Right ventricle myocardium superior (tissue), 1 donor: ENCODE measurements at regions of chr3 and their contacts with region 1.

Region 1: DNA sequence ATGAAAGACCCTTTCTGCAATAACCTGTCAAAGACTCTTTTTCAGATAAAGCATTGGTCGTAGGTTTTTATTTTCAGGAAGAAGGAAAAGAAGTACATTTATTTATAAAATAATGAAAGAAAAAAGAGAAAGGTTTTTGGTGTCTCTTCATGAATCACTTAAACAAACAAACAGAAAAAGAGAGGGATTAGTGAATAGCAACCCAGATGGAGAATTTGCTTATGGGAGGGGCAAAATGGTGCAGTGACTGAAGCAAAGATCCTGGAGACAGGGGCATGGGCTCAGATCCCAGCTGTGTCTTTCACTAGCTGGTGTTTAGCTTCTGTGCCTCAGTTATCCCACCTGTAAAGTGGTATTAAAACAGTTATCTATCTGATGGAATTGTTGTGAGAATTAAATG is 78.6 kb upstream of the PFN2 start:
- DNase-seq: no peak
- ATAC-seq: no peak

Region 2: DNA sequence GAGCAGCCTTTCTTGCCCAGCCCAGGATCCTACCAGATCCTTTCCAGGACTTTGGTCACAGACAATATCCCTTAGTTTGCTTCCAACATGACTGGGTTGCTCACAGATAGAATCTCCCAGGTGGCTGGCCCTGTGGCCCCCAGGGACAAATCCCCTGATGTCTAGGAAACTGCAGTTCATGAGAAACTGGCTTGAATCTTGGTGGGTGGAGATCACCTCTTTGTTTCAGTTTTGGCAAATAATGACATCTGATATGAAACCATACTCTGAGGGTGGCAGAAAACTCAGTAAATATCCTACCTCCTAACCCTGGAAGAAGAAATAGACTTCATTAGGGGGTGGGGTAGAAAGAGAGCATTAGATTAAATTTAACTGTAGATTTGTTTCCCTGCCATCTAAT is 34.5 kb before region 1 on chr3:
- intact Hi-C with region 1: loop called (anchors 5 kb)
- DNase-seq: no peak
- ATAC-seq: no peak